Head of caudate nucleus (tissue), 42 donors: ENCODE measurements at regions of chr3 and their contacts with region 1.

Region 1: GRCh38 chr3:38054291-38055001 is 15.4 kb downstream of the DLEC1 start:
- DNase-seq: no peak

Region 2: DNA sequence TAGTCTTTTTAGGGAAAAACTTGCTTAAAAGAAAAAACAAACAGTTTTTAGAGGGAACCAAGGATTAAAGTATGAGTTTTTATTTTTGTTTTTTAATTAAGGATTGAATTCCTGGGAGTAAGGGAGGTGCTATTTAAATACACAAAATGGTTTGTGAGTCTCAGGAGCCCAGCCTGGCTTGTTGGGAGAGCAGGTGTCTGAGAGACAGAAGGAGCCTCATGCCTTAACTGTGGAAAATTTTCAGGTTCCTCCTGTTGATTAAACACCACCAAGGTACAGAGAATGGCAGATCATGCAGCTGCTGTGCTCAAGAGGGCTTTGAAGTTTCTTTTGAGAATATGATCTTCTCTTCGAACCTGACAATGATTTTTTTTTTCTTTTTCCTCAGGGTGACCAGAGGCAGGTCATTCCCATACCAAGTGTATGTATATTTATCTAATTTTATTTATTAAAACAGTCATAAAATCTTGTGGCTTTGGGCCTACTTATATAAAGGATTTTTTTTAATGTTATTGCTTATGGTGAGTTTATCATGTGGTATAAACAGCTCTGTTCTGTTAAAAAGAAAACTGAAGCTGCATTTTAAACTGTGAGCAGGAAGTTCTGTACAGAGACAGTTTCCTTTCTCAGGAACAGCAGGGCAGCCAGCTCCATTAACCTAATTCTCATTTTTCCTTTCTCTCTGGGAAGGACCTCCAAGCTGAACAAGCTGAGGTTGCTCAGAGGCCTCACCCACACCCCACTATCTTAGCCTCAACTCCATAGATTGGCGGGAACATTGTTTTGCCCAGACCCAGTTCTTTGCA is 97.5 kb before region 1 on chr3:
- intact Hi-C with region 1: no loop called
- DNase-seq: peak in 2 of 42 donors; percentile 33 to 41

Region 3: DNA sequence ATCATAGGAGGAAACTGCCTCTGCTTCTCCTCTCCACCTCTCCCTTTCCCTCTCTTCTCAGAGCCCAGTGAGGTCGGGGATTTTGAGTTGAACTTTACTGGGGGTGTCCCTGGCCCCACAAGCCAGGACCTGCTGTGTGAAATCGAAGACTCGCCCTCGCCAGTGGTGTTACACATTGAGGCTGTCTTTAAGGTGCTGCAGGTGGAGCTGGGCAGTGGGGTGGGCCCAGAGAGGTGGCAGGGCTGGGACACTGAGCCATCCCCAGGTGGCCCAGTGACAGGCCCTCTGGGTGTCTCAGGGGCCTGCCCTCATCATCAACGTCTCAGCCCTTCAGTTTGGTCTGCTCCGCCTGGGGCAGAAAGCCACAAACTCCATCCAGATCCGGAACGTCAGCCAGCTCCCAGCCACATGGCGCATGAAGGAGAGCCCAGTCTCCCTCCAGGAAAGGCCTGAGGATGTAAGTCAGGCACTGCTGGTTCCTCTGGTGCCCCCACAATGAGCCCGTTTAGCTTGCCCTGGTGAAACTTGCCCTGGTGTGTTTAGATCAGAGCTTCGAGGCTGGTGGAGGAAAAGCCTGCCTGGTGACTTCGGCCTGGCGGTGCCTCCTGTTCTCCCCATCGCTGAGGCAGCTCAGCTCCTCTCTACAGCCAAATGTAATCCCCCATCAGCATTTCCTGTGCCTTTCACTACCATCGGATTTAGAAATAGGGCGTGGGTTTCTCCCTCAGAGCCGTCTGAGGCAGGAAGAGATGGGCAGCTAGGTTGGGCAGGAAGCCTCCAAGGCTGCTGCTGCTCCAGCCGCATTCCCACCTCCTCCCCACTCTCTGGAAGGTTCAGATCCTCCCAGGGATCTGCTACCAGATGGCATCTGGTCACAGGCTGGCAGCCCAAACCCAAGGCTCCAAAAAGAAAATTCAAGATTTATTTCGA is 43.3 kb after region 1 on chr3:
- intact Hi-C with region 1: loop called (anchors 1 kb)
- DNase-seq: no peak

Region 4: GRCh38 chr3:38397320-38397719 is 342.9 kb after region 1 on chr3:
- intact Hi-C with region 1: no loop called
- DNase-seq: peak in 1 of 42 donors; percentile 36